ENCODE measurements at regions of chr1 and their contacts with region 1.

Region 1: DNA sequence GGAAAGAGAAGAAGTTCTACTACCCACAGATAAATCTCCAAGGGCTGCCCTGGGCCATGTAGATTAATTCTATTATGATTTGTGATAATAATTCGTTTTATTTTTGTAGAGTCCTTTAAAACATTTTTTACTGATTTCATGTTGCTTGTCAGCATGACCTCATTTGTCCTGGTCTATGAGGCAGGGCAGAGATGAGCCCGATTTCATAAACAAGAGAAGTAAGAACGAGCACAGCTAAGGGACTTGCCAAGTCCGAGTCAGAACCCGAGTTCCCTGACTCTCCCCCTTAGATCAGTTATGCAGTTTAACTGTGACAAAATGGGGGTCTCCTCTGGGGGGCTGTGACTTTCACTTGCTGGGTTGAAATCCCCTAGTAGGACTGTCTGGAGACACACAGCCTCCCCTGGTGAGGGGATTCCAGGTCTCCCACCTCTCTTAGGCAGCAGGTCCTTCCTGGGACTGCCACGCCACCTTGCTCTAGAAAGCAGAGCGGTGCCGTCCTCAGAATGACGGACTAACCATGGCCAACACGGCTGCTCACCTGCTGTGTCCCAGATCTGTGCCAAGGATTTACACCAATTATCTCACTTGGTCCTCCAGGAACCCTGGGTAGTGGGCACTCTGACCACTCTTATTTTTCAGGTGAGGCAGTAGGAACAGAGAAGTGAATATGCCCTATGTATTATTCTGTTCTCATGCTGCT is 31.0 kb upstream of the SOX13 start:
- DNase-seq: no peak
- ATAC-seq: no peak
- H3K4me3 ChIP-seq: no peak overlapping the region
- H3K4me3 Mint-ChIP-seq: no peak overlapping the region
- H3K27ac ChIP-seq: no peak overlapping the region
- H3K27ac Mint-ChIP-seq: no peak overlapping the region
- H3K4me1 ChIP-seq: no peaks in the 10 kb centered on the region
- H3K4me1 Mint-ChIP-seq: no peaks in the 10 kb centered on the region
- H3K27me3 ChIP-seq: peaks cover 0 to 14% of the 10 kb centered on the region in 2 experiments
- H3K27me3 Mint-ChIP-seq: peaks cover 3 to 6% of the 10 kb centered on the region in 2 donors

Region 2: GRCh38 chr1:204728456-204728855 is 686.5 kb after region 1 on chr1:
- CTCF ChIA-PET with region 1: interaction called in 1 of 2 experiments, 15 read pairs
- POLR2A ChIA-PET with region 1: no interaction called
- DNase-seq: no peak
- ATAC-seq: no peak
- H3K4me3 ChIP-seq: no peak overlapping the region
- H3K4me3 Mint-ChIP-seq: no peak overlapping the region
- H3K27ac ChIP-seq: no peak overlapping the region
- H3K27ac Mint-ChIP-seq: no peak overlapping the region
- H3K4me1 ChIP-seq: no peaks in the 10 kb centered on the region
- H3K4me1 Mint-ChIP-seq: no peaks in the 10 kb centered on the region
- H3K27me3 ChIP-seq: peaks cover 3 to 16% of the 10 kb centered on the region in 2 experiments
- H3K27me3 Mint-ChIP-seq: peaks cover 0 to 26% of the 10 kb centered on the region in 2 donors

Measured in T-cell (primary cell).